SK-N-SH (cell line): ENCODE measurements at regions of chr6 and their contacts with region 1.

Region 1: GRCh38 chr6:20291764-20292580 is 79.7 kb upstream of the MBOAT1 start:
- DNase-seq: peak; percentile 71
- H3K4me3 ChIP-seq: no peak overlapping the region; a peak in 1 of 4 replicates
- H3K27ac ChIP-seq: no peak overlapping the region
- H3K4me1 ChIP-seq: no peaks in the 10 kb centered on the region
- H3K27me3 ChIP-seq: no peaks in the 10 kb centered on the region
- CTCF ChIP-seq: peak; percentile 94
- EP300 ChIP-seq: no peak
- RAD21 ChIP-seq: peak; percentile 95

Region 2: GRCh38 chr6:20534295-20535262 is 242.6 kb after region 1 on chr6 and contains the start of gene CDKAL1:
- CTCF ChIA-PET with region 1: interaction called, 13 read pairs
- POLR2A ChIA-PET with region 1: no interaction called
- DNase-seq: peak; percentile 69
- H3K4me3 ChIP-seq: peak within 1 kb of the TSS; percentile 75 to 79
- H3K27ac ChIP-seq: peak within 1 kb of the TSS; percentile 75 to 88
- H3K4me1 ChIP-seq: peaks cover 4 to 5% of the 10 kb centered on the region in 2 experiments; a peak in 3 of 4 replicates
- H3K27me3 ChIP-seq: no peaks in the 10 kb centered on the region
- CTCF ChIP-seq: no peak
- EP300 ChIP-seq: no peak; a peak in 1 of 4 replicates
- RAD21 ChIP-seq: no peak
- polyA plus RNA-seq, gene CDKAL1: 2.6 and 3.8 TPM in 2 replicates